ENCODE measurements at regions of chr12 and their contacts with region 1.

Region 1: GRCh38 chr12:12736759-12737676 is 19.9 kb downstream of the CDKN1B start:
- DNase-seq: peak; percentile 77
- ATAC-seq: peak; percentile 92
- H3K4me3 Mint-ChIP-seq: peak overlapping the region; percentile 70
- H3K27ac Mint-ChIP-seq: peak overlapping the region; percentile 89
- H3K4me1 Mint-ChIP-seq: peaks cover 42% of the 10 kb centered on the region
- H3K27me3 Mint-ChIP-seq: no peaks in the 10 kb centered on the region
- CTCF ChIP-seq: peak; percentile 79

Region 2: GRCh38 chr12:12433249-12433974 is 303.6 kb before region 1 on chr12:
- CTCF ChIA-PET with region 1: no interaction called
- POLR2A ChIA-PET with region 1: no interaction called
- intact Hi-C with region 1: no loop called
- DNase-seq: no peak
- ATAC-seq: no peak
- H3K4me3 Mint-ChIP-seq: no peak overlapping the region
- H3K27ac Mint-ChIP-seq: peak overlapping the region; percentile 63
- H3K4me1 Mint-ChIP-seq: peaks cover 39% of the 10 kb centered on the region
- H3K27me3 Mint-ChIP-seq: no peaks in the 10 kb centered on the region
- CTCF ChIP-seq: no peak

Region 3: GRCh38 chr12:12562585-12563261 is 174.3 kb before region 1 on chr12 and contains the start of gene DUSP16:
- CTCF ChIA-PET with region 1: interaction called, 15 read pairs
- POLR2A ChIA-PET with region 1: no interaction called
- intact Hi-C with region 1: loop called (anchors 5 kb)
- DNase-seq: peak; percentile 82
- ATAC-seq: peak; percentile 78
- H3K4me3 Mint-ChIP-seq: peak within 1 kb of the TSS; percentile 89
- H3K27ac Mint-ChIP-seq: peak within 1 kb of the TSS; percentile 91
- H3K4me1 Mint-ChIP-seq: peaks cover 33% of the 10 kb centered on the region
- H3K27me3 Mint-ChIP-seq: no peaks in the 10 kb centered on the region
- CTCF ChIP-seq: no peak
- total RNA-seq, gene DUSP16: 28.2 to 30.2 TPM

Region 4: GRCh38 chr12:12654691-12655460 is 82.1 kb before region 1 on chr12:
- CTCF ChIA-PET with region 1: interaction called, 13 read pairs
- POLR2A ChIA-PET with region 1: interaction called, 3 read pairs
- intact Hi-C with region 1: no loop called
- DNase-seq: no peak
- ATAC-seq: no peak
- H3K4me3 Mint-ChIP-seq: no peak overlapping the region
- H3K27ac Mint-ChIP-seq: no peak overlapping the region
- H3K4me1 Mint-ChIP-seq: peaks cover 7% of the 10 kb centered on the region
- H3K27me3 Mint-ChIP-seq: no peaks in the 10 kb centered on the region
- CTCF ChIP-seq: no peak

Region 5: DNA sequence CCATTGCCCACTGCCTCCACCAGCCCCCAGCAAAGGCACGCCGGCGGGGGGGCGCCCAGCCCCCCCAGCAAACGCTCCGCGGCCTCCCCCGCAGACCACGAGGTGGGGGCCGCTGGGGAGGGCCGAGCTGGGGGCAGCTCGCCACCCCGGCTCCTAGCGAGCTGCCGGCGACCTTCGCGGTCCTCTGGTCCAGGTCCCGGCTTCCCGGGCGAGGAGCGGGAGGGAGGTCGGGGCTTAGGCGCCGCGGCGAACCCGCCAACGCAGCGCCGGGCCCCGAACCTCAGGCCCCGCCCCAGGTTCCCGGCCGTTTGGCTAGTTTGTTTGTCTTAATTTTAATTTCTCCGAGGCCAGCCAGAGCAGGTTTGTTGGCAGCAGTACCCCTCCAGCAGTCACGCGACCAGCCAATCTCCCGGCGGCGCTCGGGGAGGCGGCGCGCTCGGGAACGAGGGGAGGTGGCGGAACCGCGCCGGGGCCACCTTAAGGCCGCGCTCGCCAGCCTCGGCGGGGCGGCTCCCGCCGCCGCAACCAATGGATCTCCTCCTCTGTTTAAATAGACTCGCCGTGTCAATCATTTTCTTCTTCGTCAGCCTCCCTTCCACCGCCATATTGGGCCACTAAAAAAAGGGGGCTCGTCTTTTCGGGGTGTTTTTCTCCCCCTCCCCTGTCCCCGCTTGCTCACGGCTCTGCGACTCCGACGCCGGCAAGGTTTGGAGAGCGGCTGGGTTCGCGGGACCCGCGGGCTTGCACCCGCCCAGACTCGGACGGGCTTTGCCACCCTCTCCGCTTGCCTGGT is 20.0 kb before region 1 on chr12 and contains the start of gene CDKN1B:
- CTCF ChIA-PET with region 1: interaction called, 35 read pairs
- POLR2A ChIA-PET with region 1: interaction called, 77 read pairs
- intact Hi-C with region 1: no loop called
- DNase-seq: peak; percentile 91
- ATAC-seq: peak; percentile 72
- H3K4me3 Mint-ChIP-seq: peak within 1 kb of the TSS; percentile 86
- H3K27ac Mint-ChIP-seq: peak within 1 kb of the TSS; percentile 98
- H3K4me1 Mint-ChIP-seq: peaks cover 44% of the 10 kb centered on the region
- H3K27me3 Mint-ChIP-seq: no peaks in the 10 kb centered on the region
- CTCF ChIP-seq: no peak
- total RNA-seq, gene CDKN1B: 39.9 to 40.8 TPM

Region 6: GRCh38 chr12:12786716-12787601 is 49.9 kb after region 1 on chr12:
- CTCF ChIA-PET with region 1: interaction called, 21 read pairs
- POLR2A ChIA-PET with region 1: interaction called, 12 read pairs
- intact Hi-C with region 1: no loop called
- DNase-seq: peak; percentile 67
- ATAC-seq: peak; percentile 88
- H3K4me3 Mint-ChIP-seq: peak overlapping the region; percentile 86
- H3K27ac Mint-ChIP-seq: peak overlapping the region; percentile 89
- H3K4me1 Mint-ChIP-seq: peaks cover 36% of the 10 kb centered on the region
- H3K27me3 Mint-ChIP-seq: no peaks in the 10 kb centered on the region
- CTCF ChIP-seq: no peak

Measured in activated CD8-positive, alpha-beta T cell treated with anti-CD3 and anti-CD28 coated beads for 36 hours (primary cell).